ENCODE measurements at regions of chr7 and their contacts with region 1.

Region 1: DNA sequence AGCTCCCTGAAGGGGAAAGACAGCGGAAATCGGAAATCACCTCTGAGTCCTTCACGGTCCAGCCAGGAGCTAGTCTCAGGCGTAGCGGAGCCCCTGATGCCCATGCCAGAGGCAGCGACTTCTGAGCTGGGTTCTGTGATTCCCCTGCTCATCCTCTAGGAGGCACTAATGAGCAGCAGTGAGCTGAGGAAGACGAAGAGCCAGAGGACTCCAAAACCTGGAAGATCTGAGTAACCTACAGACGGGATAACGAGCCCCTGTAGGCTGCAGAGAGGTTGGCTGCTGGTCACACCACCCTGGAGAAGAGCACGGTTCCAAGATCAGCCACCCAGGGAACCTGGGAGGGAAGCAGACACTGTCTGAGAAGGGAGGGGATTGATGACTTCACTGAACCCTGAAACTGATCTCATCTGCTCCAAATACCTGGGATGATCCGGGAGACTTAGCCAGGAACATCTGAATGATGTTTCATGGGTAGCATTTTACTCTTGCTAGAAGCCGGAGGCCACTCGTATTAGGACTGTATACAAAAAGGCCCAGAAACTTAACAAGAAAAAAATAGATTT is 304.1 kb downstream of the PAXIP1 start:
- DNase-seq: peak; percentile 71 to 84 (median 79)
- ATAC-seq: peak; percentile 83
- H3K4me3 ChIP-seq: no peak overlapping the region
- H3K27ac ChIP-seq: no peak overlapping the region
- H3K4me1 ChIP-seq: peaks cover 3 to 5% of the 10 kb centered on the region in 2 experiments; a peak in 2 of 5 replicates
- H3K27me3 ChIP-seq: peaks cover 0 to 27% of the 10 kb centered on the region in 2 experiments; a peak in 3 of 5 replicates
- CTCF ChIP-seq: peak; percentile 86 to 98 (median 89)
- EP300 ChIP-seq: no peak
- POLR2A ChIP-seq: no peak
- RAD21 ChIP-seq: peak; percentile 35 to 45

Region 2: DNA sequence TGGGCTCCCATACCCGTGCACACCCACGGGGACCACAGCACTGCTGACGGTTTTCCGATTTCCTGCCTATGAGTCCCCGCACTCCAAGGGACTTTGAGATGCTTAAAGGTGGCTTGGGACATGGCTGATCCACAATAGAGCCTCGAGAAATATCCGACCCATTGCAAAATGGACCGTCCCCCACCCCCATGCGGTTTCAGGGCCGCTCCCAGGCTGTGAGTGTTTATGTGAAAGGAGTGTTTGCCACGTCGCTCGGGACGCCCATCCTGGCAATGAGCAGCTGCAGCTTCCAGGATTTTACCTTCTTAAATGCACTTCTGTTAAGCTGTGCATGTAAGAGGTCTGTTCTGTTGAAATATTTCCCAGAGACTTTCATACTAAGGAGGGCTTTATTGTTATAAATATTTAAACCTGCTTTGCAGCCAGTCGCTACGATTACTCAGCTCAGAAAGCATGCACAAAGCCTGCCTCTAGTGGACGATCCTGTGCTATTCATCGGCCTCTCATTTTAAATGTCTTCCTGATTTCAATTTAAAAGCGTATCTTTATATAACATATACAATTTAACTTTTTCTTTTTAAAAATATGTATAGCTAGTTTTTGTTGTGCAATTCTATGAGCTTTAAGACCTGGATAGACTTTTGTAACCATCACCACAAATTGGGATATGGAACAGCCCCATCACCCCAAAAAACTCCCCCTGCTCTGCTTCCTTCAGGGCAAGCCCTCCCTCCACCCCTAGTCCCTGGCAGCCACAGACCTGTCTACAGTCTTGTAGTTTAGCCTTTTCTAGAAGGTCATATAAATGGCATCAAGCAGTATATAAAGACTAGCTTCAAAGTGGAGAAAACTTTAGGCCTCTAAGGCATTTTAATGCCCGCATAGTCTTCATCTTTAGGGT is 114.2 kb before region 1 on chr7:
- CTCF ChIA-PET with region 1: no interaction called
- POLR2A ChIA-PET with region 1: no interaction called
- in situ Hi-C with region 1: no loop called
- intact Hi-C with region 1: no loop called
- DNase-seq: peak; percentile 29 to 62 (median 56)
- ATAC-seq: peak; percentile 82
- H3K4me3 ChIP-seq: no peak overlapping the region
- H3K27ac ChIP-seq: no peak overlapping the region
- H3K4me1 ChIP-seq: no peaks in the 10 kb centered on the region
- H3K27me3 ChIP-seq: peaks cover 47 to 89% of the 10 kb centered on the region in 2 experiments
- CTCF ChIP-seq: peak; percentile 62 to 76 (median 72); a peak in 5 of 6 replicates
- EP300 ChIP-seq: no peak
- POLR2A ChIP-seq: no peak
- RAD21 ChIP-seq: no peak

Region 3: GRCh38 chr7:154744256-154744860 is 45.5 kb after region 1 on chr7:
- CTCF ChIA-PET with region 1: interaction called, 6 read pairs
- POLR2A ChIA-PET with region 1: no interaction called
- in situ Hi-C with region 1: no loop called
- intact Hi-C with region 1: loop called (anchors 1 kb)
- DNase-seq: peak; percentile 75 to 94 (median 92)
- ATAC-seq: peak; percentile 96
- H3K4me3 ChIP-seq: no peak overlapping the region
- H3K27ac ChIP-seq: no peak overlapping the region
- H3K4me1 ChIP-seq: no peaks in the 10 kb centered on the region
- H3K27me3 ChIP-seq: peaks cover 40 to 65% of the 10 kb centered on the region in 2 experiments
- CTCF ChIP-seq: peak; percentile 93 to 98 (median 94)
- EP300 ChIP-seq: no peak
- POLR2A ChIP-seq: no peak
- RAD21 ChIP-seq: peak; percentile 92 to 95

Region 4: GRCh38 chr7:154837622-154838021 is 138.8 kb after region 1 on chr7:
- CTCF ChIA-PET with region 1: no interaction called
- POLR2A ChIA-PET with region 1: no interaction called
- in situ Hi-C with region 1: no loop called
- intact Hi-C with region 1: no loop called
- DNase-seq: no peak
- ATAC-seq: no peak
- H3K4me3 ChIP-seq: no peak overlapping the region
- H3K27ac ChIP-seq: no peak overlapping the region
- H3K4me1 ChIP-seq: no peaks in the 10 kb centered on the region
- H3K27me3 ChIP-seq: peaks cover 64 to 86% of the 10 kb centered on the region in 2 experiments
- CTCF ChIP-seq: no peak
- EP300 ChIP-seq: no peak
- POLR2A ChIP-seq: no peak
- RAD21 ChIP-seq: no peak